SK-MEL-5 (cell line): ENCODE measurements at regions of chr1 and their contacts with region 1.

Region 1: GRCh38 chr1:186605762-186606350 is 74.4 kb downstream of the PTGS2 start:
- DNase-seq: peak; percentile 80

Region 2: GRCh38 chr1:186404454-186405051 is 201.3 kb before region 1 on chr1:
- in situ Hi-C with region 1: loop called (anchors 10 kb)
- DNase-seq: peak; percentile 80

Region 3: DNA sequence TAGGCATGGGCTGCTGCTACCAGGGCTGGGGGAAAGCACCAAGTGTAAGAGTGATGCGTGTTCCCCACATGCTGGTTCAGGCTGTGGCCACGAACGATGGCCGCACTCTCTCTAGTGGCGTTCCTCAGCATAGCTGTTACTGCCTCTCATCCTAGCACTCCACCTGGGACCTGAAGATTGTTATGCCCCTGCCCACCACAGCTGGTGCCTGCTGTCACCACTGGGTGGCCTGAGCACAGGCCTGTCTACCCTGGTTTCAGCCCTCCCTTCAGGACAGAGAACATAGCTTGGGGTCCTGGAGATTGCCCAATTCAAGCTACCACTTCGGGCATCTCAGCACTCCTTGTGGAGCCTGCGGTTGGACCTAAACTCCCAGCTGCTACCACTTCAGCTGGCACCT is 64.8 kb before region 1 on chr1:
- in situ Hi-C with region 1: no loop called
- DNase-seq: no peak

Region 4: GRCh38 chr1:186662740-186663139 is 56.9 kb after region 1 on chr1:
- in situ Hi-C with region 1: no loop called
- DNase-seq: no peak

Region 5: DNA sequence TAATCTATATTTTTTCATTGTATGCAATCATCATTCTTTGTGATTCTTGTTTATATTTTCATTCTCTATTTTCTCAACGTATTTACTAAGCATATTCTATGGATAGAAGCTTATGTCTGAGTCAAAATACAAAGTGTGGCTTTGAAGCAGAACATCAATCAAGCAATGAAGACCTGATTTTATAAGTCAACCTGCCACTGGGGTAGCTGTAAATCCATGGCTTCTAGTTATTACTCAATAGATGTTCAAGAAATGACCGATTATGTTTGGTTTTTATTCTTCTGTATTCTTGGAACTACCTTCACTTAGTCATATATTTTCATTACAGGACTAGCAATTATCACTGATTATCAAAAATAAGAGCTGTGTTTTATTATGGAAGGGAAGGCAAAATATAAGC is 94.9 kb after region 1 on chr1:
- in situ Hi-C with region 1: loop called (anchors 5 kb)
- DNase-seq: no peak

Region 6: GRCh38 chr1:186950547-186950946 is 344.7 kb after region 1 on chr1:
- in situ Hi-C with region 1: no loop called
- DNase-seq: no peak

Region 7: DNA sequence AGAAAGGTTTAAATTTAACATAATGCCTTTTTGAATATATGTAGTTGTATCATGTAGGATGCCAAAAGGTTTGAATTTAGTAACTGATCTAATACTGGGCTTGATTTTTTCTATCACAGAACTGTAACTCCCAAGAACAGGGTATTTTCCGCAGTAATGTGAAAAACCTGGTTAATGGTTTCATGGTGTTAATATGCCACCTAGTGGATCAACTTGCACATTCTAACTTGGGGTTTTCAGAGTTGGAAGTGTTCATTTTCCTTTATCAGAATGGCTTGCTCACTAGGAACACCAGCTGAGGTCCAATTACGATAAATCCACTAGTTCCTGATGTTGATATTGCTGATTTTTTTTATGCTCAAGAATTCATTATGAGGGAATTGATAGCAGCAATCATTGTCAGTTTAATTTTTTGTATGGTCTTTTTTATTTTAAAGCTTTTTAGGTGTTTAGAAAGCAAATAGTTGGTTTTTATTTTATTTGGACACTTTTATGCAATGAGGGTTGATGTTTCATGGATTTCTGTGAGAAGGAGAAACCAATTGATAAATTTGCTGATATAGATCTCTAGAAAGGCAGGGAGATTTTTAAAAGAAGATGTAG is 380.1 kb after region 1 on chr1:
- in situ Hi-C with region 1: loop called (anchors 25 kb)
- DNase-seq: peak; percentile 74